ENCODE measurements at regions of chr5 and their contacts with region 1.

Region 1: DNA sequence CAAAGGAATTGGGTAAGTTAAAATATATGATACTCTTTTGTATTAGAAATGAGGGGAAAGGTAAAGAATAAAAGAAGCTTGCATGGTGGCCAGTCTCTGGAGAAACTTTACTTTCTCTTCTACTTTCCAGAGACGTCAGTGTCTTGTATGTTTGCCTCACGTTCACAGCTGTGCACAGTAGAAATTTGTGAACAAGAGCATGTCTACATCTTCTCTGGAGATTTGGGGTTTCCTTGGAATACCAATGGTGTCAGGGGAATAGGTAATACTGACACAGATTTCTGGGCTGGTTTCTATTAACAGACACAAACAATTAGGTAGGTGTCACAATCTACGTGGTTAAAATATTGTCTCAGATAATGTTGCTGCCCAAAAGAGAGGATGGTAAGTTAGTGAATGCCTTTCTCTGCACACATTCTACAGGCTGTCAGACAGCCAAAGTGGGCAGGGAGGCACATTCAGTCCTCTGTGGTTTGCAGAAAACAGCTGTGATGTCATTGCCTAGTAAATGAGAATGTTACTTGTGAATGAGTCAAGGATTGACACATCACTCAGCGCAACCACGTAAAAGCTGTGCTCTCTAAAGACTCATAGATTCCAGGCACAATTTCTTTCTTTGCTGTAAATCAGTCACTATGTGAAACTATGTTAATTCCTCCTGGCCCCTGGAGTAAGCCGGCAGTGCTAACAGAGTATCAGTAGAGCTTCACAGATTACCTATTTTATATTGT is 397.1 kb downstream of the MAN2A1 start:
- DNase-seq: peak; percentile 89
- H3K4me3 Mint-ChIP-seq: peak overlapping the region; percentile 64
- H3K27ac Mint-ChIP-seq: peak overlapping the region; percentile 95
- H3K4me1 Mint-ChIP-seq: peaks cover 58% of the 10 kb centered on the region
- H3K27me3 Mint-ChIP-seq: no peaks in the 10 kb centered on the region

Region 2: DNA sequence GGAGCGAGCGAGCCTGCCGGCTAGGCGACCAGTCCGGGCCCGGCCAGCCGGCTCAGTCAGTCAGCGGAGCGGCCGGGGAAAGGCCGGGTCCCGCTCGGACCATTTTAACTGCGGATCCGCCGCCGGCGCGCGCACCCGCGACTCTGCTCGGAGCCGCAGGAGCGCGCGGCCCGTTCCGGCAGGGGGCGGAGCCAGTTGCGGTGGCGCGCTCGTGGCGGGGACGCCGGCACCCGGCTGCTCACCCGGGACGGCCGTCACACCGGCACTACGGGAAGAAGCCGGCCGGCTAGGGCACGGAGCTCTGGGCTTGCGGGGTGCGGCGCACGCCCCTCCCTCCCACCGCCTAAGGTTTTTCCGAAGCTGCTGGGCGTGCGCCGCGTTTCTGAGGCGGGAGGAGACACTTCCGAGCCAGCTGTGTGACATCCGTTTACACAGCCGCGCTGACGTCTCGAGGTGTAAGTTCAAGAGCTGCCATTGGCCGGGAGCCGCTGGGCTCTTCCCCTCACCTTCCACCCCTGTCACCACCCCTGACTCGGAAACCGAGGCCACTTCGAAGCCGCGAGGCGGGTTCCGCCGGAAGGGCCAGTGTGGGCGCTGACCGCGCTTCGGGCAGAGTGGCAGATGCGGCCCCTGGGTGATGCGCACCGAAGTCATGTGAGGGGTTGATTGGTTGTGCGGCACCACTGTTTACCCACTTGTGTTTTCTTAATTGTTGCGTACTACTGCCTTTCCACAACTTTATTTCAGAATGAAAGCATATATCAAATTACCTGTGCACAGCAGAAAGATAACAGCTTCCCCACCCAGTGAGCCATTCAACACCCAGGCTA is 1704.7 kb before region 1 on chr5 and contains the start of gene FBXL17:
- CTCF ChIA-PET with region 1: no interaction called
- intact Hi-C with region 1: loop called (anchors 2 kb)
- DNase-seq: peak; percentile 95
- H3K4me3 Mint-ChIP-seq: peak within 1 kb of the TSS; percentile 82
- H3K27ac Mint-ChIP-seq: peak within 1 kb of the TSS; percentile 95
- H3K4me1 Mint-ChIP-seq: peaks cover 36% of the 10 kb centered on the region
- H3K27me3 Mint-ChIP-seq: no peaks in the 10 kb centered on the region
- total RNA-seq, gene FBXL17: 3.5 to 4.3 TPM

Region 3: GRCh38 chr5:109852371-109853155 is 234.3 kb before region 1 on chr5:
- CTCF ChIA-PET with region 1: no interaction called
- intact Hi-C with region 1: loop called (anchors 2 kb)
- DNase-seq: peak; percentile 30
- H3K4me3 Mint-ChIP-seq: no peak overlapping the region
- H3K27ac Mint-ChIP-seq: peak overlapping the region; percentile 54
- H3K4me1 Mint-ChIP-seq: peaks cover 75% of the 10 kb centered on the region
- H3K27me3 Mint-ChIP-seq: no peaks in the 10 kb centered on the region

Region 4: DNA sequence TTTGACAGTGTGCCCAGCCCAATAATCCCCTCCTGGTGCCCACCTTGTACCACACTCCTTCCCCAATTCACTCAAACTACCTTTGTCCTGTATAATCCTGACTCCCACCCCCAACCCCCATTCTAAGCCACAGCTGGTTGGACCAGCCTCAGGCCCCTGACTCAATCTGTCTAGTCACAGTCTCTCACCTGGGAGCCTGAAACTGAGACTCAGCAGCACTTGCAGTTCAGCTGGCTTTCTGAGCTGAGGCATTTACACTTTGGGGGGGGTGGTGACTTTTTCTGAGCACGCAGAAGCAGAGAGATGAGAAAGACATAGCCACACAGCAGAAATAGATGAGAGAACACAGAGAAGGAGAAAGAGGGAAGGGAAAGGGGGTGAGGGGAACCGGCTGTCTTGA is 149.8 kb before region 1 on chr5:
- CTCF ChIA-PET with region 1: no interaction called
- intact Hi-C with region 1: loop called (anchors 1 kb)
- DNase-seq: peak; percentile 81
- H3K4me3 Mint-ChIP-seq: peak overlapping the region; percentile 17
- H3K27ac Mint-ChIP-seq: peak overlapping the region; percentile 80
- H3K4me1 Mint-ChIP-seq: peaks cover 29% of the 10 kb centered on the region
- H3K27me3 Mint-ChIP-seq: no peaks in the 10 kb centered on the region

Region 5: GRCh38 chr5:110054240-110054639 is 32.6 kb before region 1 on chr5:
- CTCF ChIA-PET with region 1: no interaction called
- intact Hi-C with region 1: loop called (anchors 1 kb)
- DNase-seq: peak; percentile 91
- H3K4me3 Mint-ChIP-seq: peak overlapping the region; percentile 12
- H3K27ac Mint-ChIP-seq: peak overlapping the region; percentile 87
- H3K4me1 Mint-ChIP-seq: peaks cover 37% of the 10 kb centered on the region
- H3K27me3 Mint-ChIP-seq: no peaks in the 10 kb centered on the region

Region 6: DNA sequence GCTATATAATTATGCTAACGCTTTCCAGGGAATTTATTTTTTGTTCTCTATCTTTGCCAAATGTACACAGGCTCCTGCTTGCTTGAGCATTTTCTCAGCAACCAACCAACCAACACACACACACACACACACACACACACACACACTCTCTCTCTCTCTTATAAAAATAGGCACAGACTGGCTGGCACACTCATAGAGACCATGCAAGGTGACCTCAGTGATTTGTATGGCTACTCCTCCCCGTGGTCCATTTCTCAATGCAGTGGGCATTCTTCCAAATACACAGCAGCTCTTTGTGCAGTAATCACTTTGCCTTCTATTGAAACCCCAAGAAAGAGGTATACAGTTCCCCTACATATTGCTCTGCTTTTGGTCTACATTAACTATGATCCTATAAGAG is 18.9 kb after region 1 on chr5:
- CTCF ChIA-PET with region 1: interaction called, 3 read pairs
- intact Hi-C with region 1: loop called (anchors 2 kb)
- DNase-seq: no peak
- H3K4me3 Mint-ChIP-seq: no peak overlapping the region
- H3K27ac Mint-ChIP-seq: no peak overlapping the region
- H3K4me1 Mint-ChIP-seq: peaks cover 39% of the 10 kb centered on the region
- H3K27me3 Mint-ChIP-seq: no peaks in the 10 kb centered on the region

Region 7: GRCh38 chr5:110751902-110752762 is 665.3 kb after region 1 on chr5:
- CTCF ChIA-PET with region 1: no interaction called
- intact Hi-C with region 1: loop called (anchors 5 kb)
- DNase-seq: peak; percentile 53
- H3K4me3 Mint-ChIP-seq: peak overlapping the region; percentile 19
- H3K27ac Mint-ChIP-seq: peak overlapping the region; percentile 91
- H3K4me1 Mint-ChIP-seq: peaks cover 45% of the 10 kb centered on the region
- H3K27me3 Mint-ChIP-seq: no peaks in the 10 kb centered on the region